ENCODE measurements at regions of chr21 and their contacts with region 1.

Region 1: GRCh38 chr21:14773777-14774345 is 227.7 kb upstream of the SAMSN1 start:
- DNase-seq: peak; percentile 79
- H3K4me3 Mint-ChIP-seq: no peak overlapping the region
- H3K27ac Mint-ChIP-seq: no peak overlapping the region
- H3K4me1 Mint-ChIP-seq: no peaks in the 10 kb centered on the region
- H3K27me3 Mint-ChIP-seq: peaks cover 2% of the 10 kb centered on the region

Region 2: DNA sequence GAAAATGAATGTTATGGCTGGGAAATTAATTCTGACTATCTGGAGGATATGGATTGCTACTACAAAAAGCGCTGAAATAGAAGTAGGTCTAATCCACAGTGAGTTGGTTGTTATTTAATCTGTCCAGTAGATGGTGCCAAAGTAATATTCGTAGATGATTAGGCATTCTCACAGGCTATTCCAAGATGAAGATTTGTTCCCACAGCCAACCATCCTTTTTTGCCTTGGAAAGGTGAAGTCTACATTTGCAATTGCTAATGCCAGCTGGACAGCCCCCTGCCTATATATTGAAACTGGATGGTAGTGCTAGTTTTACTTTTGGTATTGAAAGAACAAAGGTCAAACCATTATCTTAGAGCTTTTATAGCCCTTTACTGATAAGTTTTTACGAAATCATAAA is 514.1 kb before region 1 on chr21:
- CTCF ChIA-PET with region 1: interaction called, 3 read pairs
- intact Hi-C with region 1: loop called (anchors 1 kb)
- DNase-seq: no peak
- H3K4me3 Mint-ChIP-seq: no peak overlapping the region
- H3K27ac Mint-ChIP-seq: no peak overlapping the region
- H3K4me1 Mint-ChIP-seq: peaks cover 8% of the 10 kb centered on the region
- H3K27me3 Mint-ChIP-seq: no peaks in the 10 kb centered on the region

Region 3: GRCh38 chr21:14306151-14306907 is 467.5 kb before region 1 on chr21:
- CTCF ChIA-PET with region 1: interaction called, 5 read pairs
- intact Hi-C with region 1: loop called (anchors 2 kb)
- DNase-seq: no peak
- H3K4me3 Mint-ChIP-seq: no peak overlapping the region
- H3K27ac Mint-ChIP-seq: no peak overlapping the region
- H3K4me1 Mint-ChIP-seq: no peaks in the 10 kb centered on the region
- H3K27me3 Mint-ChIP-seq: peaks cover 5% of the 10 kb centered on the region

Region 4: GRCh38 chr21:14403681-14404318 is 370.1 kb before region 1 on chr21:
- CTCF ChIA-PET with region 1: no interaction called
- intact Hi-C with region 1: loop called (anchors 1 kb)
- DNase-seq: peak; percentile 9
- H3K4me3 Mint-ChIP-seq: no peak overlapping the region
- H3K27ac Mint-ChIP-seq: no peak overlapping the region
- H3K4me1 Mint-ChIP-seq: no peaks in the 10 kb centered on the region
- H3K27me3 Mint-ChIP-seq: no peaks in the 10 kb centered on the region

Region 5: GRCh38 chr21:14675774-14676530 is 97.9 kb before region 1 on chr21:
- CTCF ChIA-PET with region 1: no interaction called
- intact Hi-C with region 1: no loop called
- DNase-seq: peak; percentile 28
- H3K4me3 Mint-ChIP-seq: peak overlapping the region; percentile 63
- H3K27ac Mint-ChIP-seq: peak overlapping the region; percentile 91
- H3K4me1 Mint-ChIP-seq: peaks cover 40% of the 10 kb centered on the region
- H3K27me3 Mint-ChIP-seq: no peaks in the 10 kb centered on the region

Region 6: GRCh38 chr21:14762734-14763694 is 10.8 kb before region 1 on chr21:
- CTCF ChIA-PET with region 1: interaction called, 10 read pairs
- intact Hi-C with region 1: no loop called
- DNase-seq: no peak
- H3K4me3 Mint-ChIP-seq: no peak overlapping the region
- H3K27ac Mint-ChIP-seq: no peak overlapping the region
- H3K4me1 Mint-ChIP-seq: no peaks in the 10 kb centered on the region
- H3K27me3 Mint-ChIP-seq: no peaks in the 10 kb centered on the region

Region 7: GRCh38 chr21:14968821-14969220 is 195.0 kb after region 1 on chr21:
- CTCF ChIA-PET with region 1: no interaction called
- intact Hi-C with region 1: no loop called
- DNase-seq: no peak
- H3K4me3 Mint-ChIP-seq: no peak overlapping the region
- H3K27ac Mint-ChIP-seq: no peak overlapping the region
- H3K4me1 Mint-ChIP-seq: peaks cover 3% of the 10 kb centered on the region
- H3K27me3 Mint-ChIP-seq: no peaks in the 10 kb centered on the region